Upper lobe of right lung (tissue), 1 donor: ENCODE measurements at regions of chr10 and their contacts with region 1.

Region 1: GRCh38 chr10:88835096-88835909 is 16.3 kb downstream of the ANKRD22 start:
- DNase-seq: peak; percentile 89
- ATAC-seq: peak; percentile 97
- H3K4me3 ChIP-seq: no peak overlapping the region
- H3K27ac ChIP-seq: no peak overlapping the region
- H3K4me1 ChIP-seq: no peaks in the 10 kb centered on the region
- H3K27me3 ChIP-seq: no peaks in the 10 kb centered on the region
- CTCF ChIP-seq: peak; percentile 89

Region 2: GRCh38 chr10:87646939-87647338 is 1188.4 kb before region 1 on chr10:
- intact Hi-C with region 1: no loop called
- DNase-seq: no peak
- ATAC-seq: peak; percentile 68
- H3K4me3 ChIP-seq: no peak overlapping the region
- H3K27ac ChIP-seq: peak overlapping the region; percentile 30
- H3K4me1 ChIP-seq: peaks cover 6% of the 10 kb centered on the region
- H3K27me3 ChIP-seq: no peaks in the 10 kb centered on the region
- CTCF ChIP-seq: no peak

Region 3: GRCh38 chr10:88763441-88763840 is 71.9 kb before region 1 on chr10:
- intact Hi-C with region 1: no loop called
- DNase-seq: no peak
- ATAC-seq: no peak
- H3K4me3 ChIP-seq: no peak overlapping the region
- H3K27ac ChIP-seq: no peak overlapping the region
- H3K4me1 ChIP-seq: no peaks in the 10 kb centered on the region
- H3K27me3 ChIP-seq: no peaks in the 10 kb centered on the region
- CTCF ChIP-seq: no peak

Region 4: GRCh38 chr10:88932539-88933256 is 97.4 kb after region 1 on chr10:
- intact Hi-C with region 1: loop called (anchors 10 kb)
- DNase-seq: no peak
- ATAC-seq: peak; percentile 92
- H3K4me3 ChIP-seq: no peak overlapping the region
- H3K27ac ChIP-seq: no peak overlapping the region
- H3K4me1 ChIP-seq: peaks cover 14% of the 10 kb centered on the region
- H3K27me3 ChIP-seq: no peaks in the 10 kb centered on the region
- CTCF ChIP-seq: peak; percentile 90